Heart right ventricle (tissue), 16 donors: ENCODE measurements at regions of chr6 and their contacts with region 1.

Region 1: DNA sequence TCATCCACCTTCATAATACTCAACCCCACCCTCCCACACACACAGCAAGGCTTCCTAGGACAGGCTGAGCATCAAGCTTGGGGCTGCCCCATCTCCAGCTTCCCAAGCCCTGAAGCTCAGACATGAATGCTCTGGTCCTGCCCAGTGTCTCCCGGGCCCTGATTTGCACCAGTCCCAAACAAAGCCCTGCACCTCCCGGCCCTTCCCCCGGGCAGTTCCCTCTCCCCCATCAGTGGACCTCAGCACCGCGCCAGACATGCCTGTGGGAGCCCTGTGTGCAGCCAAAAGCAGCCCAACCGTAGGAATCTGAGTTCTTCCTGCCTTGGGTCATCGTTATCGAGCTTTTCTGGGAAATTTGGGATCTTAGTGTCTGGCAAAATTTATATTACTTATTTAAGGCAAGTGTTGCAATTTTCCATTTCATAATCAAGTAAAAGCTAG is 63.5 kb downstream of the THBS2 start:
- DNase-seq: peak; percentile 61 to 71
- ATAC-seq: peak; percentile 92 to 95 (median 94)
- H3K4me3 ChIP-seq: no peak overlapping the region
- H3K27ac ChIP-seq: peak overlapping the region; percentile 22 to 81 (median 76)
- H3K4me1 ChIP-seq: peaks cover 3 to 19% (median 7%) of the 10 kb centered on the region in 9 donors
- H3K27me3 ChIP-seq: peaks cover 0 to 3% (median 0%) of the 10 kb centered on the region in 7 donors
- CTCF ChIP-seq: no peak

Region 2: DNA sequence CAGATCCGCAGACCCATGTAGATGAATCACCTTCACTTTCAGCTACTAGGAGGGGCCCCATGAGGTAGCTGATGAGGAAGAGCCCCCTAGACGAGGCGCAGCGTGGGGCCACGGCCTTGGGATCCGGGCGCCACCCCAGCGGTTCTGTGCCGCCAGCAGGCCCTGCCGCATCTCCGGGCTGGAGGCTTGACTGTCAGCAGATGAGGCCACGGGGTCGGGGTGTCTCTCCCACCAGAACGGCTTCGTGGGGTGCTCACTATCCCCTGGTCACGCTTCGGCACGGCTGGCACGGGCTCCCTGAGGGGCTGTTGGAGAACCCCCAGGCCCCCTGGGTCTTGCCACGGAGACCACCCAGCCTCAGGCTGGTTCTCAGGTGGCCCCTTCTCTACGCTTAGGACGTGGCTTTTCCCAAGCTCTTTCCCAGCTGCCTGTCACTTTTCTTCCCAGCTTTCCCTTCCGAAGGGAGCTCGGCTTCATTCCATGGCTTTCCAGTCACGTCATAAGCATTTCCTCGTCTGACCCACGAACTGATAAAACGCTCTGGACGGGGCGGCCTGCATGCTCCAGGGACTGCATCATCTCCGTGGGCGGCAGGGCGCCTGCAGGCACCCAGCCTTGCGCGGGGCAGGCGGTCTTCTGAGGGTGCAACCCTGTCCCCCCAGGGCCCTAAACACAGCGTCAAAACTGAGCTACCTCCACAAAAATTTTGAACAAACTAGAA is 22.4 kb before region 1 on chr6:
- intact Hi-C with region 1: loop called in 1 of 10 experiments (anchors 1 kb)
- DNase-seq: peak; percentile 66 to 80
- ATAC-seq: peak; percentile 68 to 87 (median 82)
- H3K4me3 ChIP-seq: peak overlapping the region in 3 of 10 donors; percentile 11 to 29 (median 17)
- H3K27ac ChIP-seq: peak overlapping the region; percentile 40 to 88 (median 76)
- H3K4me1 ChIP-seq: peaks cover 0 to 15% (median 8%) of the 10 kb centered on the region in 9 donors
- H3K27me3 ChIP-seq: peaks cover 0 to 7% (median 0%) of the 10 kb centered on the region in 7 donors
- CTCF ChIP-seq: no peak

Region 3: GRCh38 chr6:169589293-169589692 is 399.1 kb after region 1 on chr6:
- intact Hi-C with region 1: no loop called
- DNase-seq: no peak
- ATAC-seq: peak in 1 of 8 donors; percentile 8
- H3K4me3 ChIP-seq: no peak overlapping the region
- H3K27ac ChIP-seq: peak overlapping the region in 2 of 10 donors; percentile 11 to 12
- H3K4me1 ChIP-seq: peaks cover 0 to 13% (median 0%) of the 10 kb centered on the region in 9 donors
- H3K27me3 ChIP-seq: no peaks in the 10 kb centered on the region
- CTCF ChIP-seq: no peak